ENCODE measurements at regions of chr1 and their contacts with region 1.

Region 1: GRCh38 chr1:20696397-20697329 is 21.1 kb downstream of the KIF17 start:
- DNase-seq: peak; percentile 78
- H3K4me3 ChIP-seq: peak overlapping the region; percentile 42 to 44
- H3K27ac ChIP-seq: peak overlapping the region; percentile 77 to 84
- H3K4me1 ChIP-seq: no peaks in the 10 kb centered on the region
- H3K27me3 ChIP-seq: no peaks in the 10 kb centered on the region
- CTCF ChIP-seq: peak; percentile 77 to 89 (median 84)
- POLR2A ChIP-seq: no peak

Region 2: GRCh38 chr1:20732588-20733360 is 36.1 kb after region 1 on chr1 and contains the start of gene SH2D5:
- intact Hi-C with region 1: loop called (anchors 2 kb)
- DNase-seq: peak; percentile 84
- H3K4me3 ChIP-seq: peak within 1 kb of the TSS; percentile 45 to 64
- H3K27ac ChIP-seq: peak within 1 kb of the TSS; percentile 56 to 63
- H3K4me1 ChIP-seq: no peaks in the 10 kb centered on the region
- H3K27me3 ChIP-seq: no peaks in the 10 kb centered on the region
- CTCF ChIP-seq: peak in 3 of 4 experiments; percentile 13 to 44 (median 43)
- POLR2A ChIP-seq: no peak
- total RNA-seq, gene SH2D5: 2.2 TPM in 1 of 2 donors, not detected in the other

Region 3: DNA sequence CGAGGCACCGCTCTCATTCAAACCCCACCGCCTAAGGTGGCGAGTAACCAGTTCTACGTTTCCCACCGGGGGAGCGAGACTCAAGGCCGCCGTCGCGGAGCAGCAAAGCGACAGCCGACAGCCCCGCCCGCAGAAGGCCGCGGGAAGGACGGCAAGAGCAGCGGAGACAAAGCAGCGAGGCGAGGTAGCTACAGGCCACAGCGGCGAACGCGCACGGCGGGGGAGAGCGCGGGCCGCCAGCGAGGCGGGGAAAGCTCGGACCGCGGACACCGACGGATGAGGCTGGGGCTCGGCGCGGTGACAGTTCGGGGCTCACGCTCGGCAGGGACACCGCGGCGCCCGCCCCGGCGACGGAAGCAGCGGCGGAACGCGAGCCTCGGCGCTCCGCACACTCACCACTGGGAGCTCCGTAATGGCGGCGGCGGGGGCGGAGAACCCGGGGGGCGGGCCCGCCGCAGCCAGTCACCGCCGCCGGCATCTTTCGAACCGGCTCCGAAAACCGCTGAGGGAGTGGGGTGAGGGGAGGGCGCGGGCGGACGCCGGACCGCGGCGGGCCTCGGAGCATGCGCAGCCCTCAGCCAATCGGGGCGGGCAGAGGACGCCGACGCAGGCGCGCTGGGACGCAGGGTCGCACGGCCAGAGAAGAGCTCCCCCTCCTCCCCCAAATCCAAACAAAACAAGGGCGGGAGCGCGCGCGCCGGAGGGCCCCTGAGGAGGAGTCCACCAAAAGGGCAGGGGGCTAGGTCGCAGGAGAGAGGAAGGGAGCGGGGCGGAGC is 89.8 kb after region 1 on chr1:
- intact Hi-C with region 1: loop called (anchors 5 kb)
- DNase-seq: peak; percentile 93
- H3K4me3 ChIP-seq: peak overlapping the region; percentile 97
- H3K27ac ChIP-seq: peak overlapping the region; percentile 99
- H3K4me1 ChIP-seq: peaks cover 12% of the 10 kb centered on the region
- H3K27me3 ChIP-seq: no peaks in the 10 kb centered on the region
- CTCF ChIP-seq: peak in 3 of 4 experiments; percentile 3 to 19 (median 5)
- POLR2A ChIP-seq: peak; percentile 84

Region 4: GRCh38 chr1:20932437-20932977 is 235.8 kb after region 1 on chr1:
- intact Hi-C with region 1: no loop called
- DNase-seq: no peak
- H3K4me3 ChIP-seq: no peak overlapping the region
- H3K27ac ChIP-seq: no peak overlapping the region
- H3K4me1 ChIP-seq: no peaks in the 10 kb centered on the region
- H3K27me3 ChIP-seq: no peaks in the 10 kb centered on the region
- CTCF ChIP-seq: no peak
- POLR2A ChIP-seq: no peak

Region 5: DNA sequence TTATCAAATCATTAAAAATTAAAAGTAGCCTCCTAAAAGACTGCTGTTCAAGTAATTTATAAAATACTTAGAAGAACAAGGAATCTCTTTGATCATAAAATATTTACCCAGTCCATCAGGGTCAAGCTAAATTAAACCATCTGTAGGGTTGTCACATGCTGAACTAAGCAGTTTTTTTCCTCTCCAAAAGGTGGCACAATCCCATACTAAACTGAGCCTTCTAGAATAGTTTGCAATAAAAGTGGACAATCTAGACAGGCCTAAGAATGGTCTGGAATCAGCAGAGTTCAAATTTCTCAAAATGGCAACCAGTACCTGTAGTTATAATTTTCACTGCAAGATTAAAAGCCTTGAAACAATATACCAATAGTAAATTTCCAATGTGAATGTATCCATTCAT is 285.3 kb after region 1 on chr1:
- intact Hi-C with region 1: loop called (anchors 10 kb)
- DNase-seq: no peak
- H3K4me3 ChIP-seq: no peak overlapping the region
- H3K27ac ChIP-seq: no peak overlapping the region
- H3K4me1 ChIP-seq: no peaks in the 10 kb centered on the region
- H3K27me3 ChIP-seq: no peaks in the 10 kb centered on the region
- CTCF ChIP-seq: peak in 2 of 4 experiments; percentile 38 to 45
- POLR2A ChIP-seq: no peak

Region 6: GRCh38 chr1:21200767-21201166 is 504.1 kb after region 1 on chr1:
- intact Hi-C with region 1: loop called (anchors 1 kb)
- DNase-seq: no peak
- H3K4me3 ChIP-seq: no peak overlapping the region
- H3K27ac ChIP-seq: no peak overlapping the region
- H3K4me1 ChIP-seq: no peaks in the 10 kb centered on the region
- H3K27me3 ChIP-seq: no peaks in the 10 kb centered on the region
- CTCF ChIP-seq: no peak
- POLR2A ChIP-seq: no peak

Measured in prostate gland (tissue), 2 donors.